A549 (cell line): ENCODE measurements at regions of chr2 and their contacts with region 1.

Region 1: DNA sequence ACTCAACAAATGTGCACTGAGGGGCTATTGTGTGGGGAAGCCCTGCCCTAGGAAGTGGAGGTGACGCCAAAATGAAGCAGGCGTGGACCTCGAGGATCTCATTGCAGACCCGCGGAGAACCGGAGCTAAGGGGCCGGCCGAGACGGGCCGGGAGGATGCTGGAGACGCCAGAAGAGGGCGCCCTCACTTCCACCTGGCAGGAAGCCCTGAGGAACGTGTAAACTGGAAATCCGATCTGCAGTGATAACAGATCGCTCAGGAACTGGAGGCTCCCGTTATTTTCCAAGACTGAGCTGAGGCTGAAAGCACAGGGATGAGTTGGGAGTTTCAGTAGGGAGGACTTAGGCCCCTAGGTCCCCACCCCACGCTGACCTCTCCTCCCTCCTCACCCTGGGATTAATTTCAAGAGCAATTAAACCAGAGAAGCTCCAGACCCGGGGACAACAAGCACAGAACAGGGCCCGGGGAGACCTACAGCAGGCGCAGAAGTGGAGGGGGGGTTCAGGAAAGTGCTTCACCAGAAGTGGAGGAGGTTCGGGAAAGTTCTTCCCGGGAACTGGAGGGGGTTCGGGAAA is 7.7 kb upstream of the COL6A3 start:
- DNase-seq: peak; percentile 71 to 85
- ATAC-seq: peak; percentile 92 to 98
- H3K4me3 ChIP-seq: 0 out of 3 replicates have a peak overlapping the region, but pooled peaks have one; percentile 22
- H3K27ac ChIP-seq: peak overlapping the region; percentile 78 to 83
- H3K4me1 ChIP-seq: peaks cover 9% of the 10 kb centered on the region
- CTCF ChIP-seq: peak; percentile 85
- EP300 ChIP-seq: no peak
- POLR2A ChIP-seq: no peak
- RAD21 ChIP-seq: peak; percentile 73 to 75

Region 2: DNA sequence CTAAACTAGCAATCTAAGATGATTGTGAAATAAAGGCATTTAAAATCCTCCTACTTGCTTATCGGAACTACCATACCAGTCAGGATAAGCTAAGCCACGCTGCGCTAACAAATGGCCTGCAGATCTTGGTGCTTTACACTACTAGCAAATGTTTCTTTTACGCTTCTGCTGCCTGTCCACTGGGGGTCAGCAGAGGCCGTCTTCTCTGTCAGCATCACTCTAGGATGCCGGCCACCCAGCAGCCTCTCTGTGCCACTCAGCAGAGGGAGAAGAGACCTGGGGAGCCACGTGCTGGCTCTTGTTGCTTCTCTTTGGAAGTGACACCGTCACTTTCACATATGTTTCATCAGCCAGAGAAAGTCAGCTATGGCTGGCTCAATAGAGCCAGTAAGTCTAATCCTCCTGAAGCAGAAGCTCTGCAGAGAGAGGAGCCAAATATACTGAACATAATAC is 299.4 kb before region 1 on chr2:
- CTCF ChIA-PET with region 1: interaction called, 26 read pairs
- POLR2A ChIA-PET with region 1: no interaction called
- DNase-seq: peak; percentile 35 to 80
- ATAC-seq: peak; percentile 92 to 97
- H3K4me3 ChIP-seq: no peak overlapping the region
- H3K27ac ChIP-seq: peak overlapping the region; percentile 44 to 73; a peak in 4 of 6 replicates
- H3K4me1 ChIP-seq: peaks cover 6% of the 10 kb centered on the region
- CTCF ChIP-seq: peak; percentile 86
- EP300 ChIP-seq: no peak
- POLR2A ChIP-seq: no peak
- RAD21 ChIP-seq: peak; percentile 91 to 92

Region 3: GRCh38 chr2:237154082-237154638 is 267.5 kb before region 1 on chr2:
- CTCF ChIA-PET with region 1: interaction called, 14 read pairs
- POLR2A ChIA-PET with region 1: no interaction called
- DNase-seq: peak; percentile 45 to 75
- ATAC-seq: peak; percentile 55 to 83; a peak in 3 of 6 replicates
- H3K4me3 ChIP-seq: no peak overlapping the region
- H3K27ac ChIP-seq: no peak overlapping the region
- H3K4me1 ChIP-seq: no peaks in the 10 kb centered on the region
- CTCF ChIP-seq: peak; percentile 74
- EP300 ChIP-seq: no peak
- POLR2A ChIP-seq: no peak
- RAD21 ChIP-seq: peak; percentile 90 to 98

Region 4: DNA sequence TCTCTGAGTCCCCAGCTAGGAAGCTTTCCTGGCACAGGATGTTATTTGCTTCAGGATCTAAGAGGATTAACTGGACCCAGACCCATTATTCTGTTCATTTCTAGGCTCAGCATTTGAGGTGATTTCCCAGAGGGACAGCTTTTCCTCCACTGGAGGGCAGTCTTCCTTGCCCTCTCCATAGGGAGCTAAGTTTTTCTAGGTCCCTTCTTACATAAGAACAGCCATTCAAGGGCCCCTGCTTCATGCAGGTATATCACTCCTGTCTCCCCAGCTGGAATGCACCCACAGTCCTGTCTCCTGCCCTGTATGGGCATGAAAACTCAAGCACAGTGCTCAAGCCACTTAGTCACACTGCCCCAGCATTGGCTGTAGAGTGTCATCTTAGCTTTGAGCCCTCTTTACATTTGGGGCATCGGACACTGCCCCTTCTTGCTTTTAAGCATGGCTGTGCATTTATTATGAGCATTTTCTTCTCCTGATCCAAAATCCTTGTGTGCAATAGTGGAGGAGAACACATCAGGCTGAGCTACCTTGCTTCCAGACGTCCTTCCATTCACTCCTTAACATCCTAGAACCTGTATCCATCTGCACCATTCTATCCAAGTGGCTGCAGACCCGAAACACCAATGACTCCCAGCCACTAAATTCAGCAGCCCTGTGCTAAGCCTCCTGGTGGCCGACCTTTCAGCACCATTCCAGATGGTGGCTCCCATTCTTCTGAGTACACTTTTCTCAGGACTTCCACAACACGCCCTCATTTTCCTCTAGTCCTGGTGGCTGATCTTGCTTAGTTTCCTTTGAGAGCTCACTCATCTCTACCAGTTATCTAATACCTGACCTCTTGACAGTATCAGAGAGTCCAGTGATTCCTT is 256.0 kb before region 1 on chr2:
- CTCF ChIA-PET with region 1: interaction called, 14 read pairs
- POLR2A ChIA-PET with region 1: no interaction called
- DNase-seq: peak in 1 of 2 experiments; percentile 35
- ATAC-seq: peak; percentile 68 to 80; a peak in 5 of 6 replicates
- H3K4me3 ChIP-seq: no peak overlapping the region
- H3K27ac ChIP-seq: no peak overlapping the region; a peak in 1 of 6 replicates
- H3K4me1 ChIP-seq: no peaks in the 10 kb centered on the region
- CTCF ChIP-seq: peak; percentile 52
- EP300 ChIP-seq: no peak
- POLR2A ChIP-seq: no peak
- RAD21 ChIP-seq: peak; percentile 38 to 63; a peak in 4 of 5 replicates

Region 5: DNA sequence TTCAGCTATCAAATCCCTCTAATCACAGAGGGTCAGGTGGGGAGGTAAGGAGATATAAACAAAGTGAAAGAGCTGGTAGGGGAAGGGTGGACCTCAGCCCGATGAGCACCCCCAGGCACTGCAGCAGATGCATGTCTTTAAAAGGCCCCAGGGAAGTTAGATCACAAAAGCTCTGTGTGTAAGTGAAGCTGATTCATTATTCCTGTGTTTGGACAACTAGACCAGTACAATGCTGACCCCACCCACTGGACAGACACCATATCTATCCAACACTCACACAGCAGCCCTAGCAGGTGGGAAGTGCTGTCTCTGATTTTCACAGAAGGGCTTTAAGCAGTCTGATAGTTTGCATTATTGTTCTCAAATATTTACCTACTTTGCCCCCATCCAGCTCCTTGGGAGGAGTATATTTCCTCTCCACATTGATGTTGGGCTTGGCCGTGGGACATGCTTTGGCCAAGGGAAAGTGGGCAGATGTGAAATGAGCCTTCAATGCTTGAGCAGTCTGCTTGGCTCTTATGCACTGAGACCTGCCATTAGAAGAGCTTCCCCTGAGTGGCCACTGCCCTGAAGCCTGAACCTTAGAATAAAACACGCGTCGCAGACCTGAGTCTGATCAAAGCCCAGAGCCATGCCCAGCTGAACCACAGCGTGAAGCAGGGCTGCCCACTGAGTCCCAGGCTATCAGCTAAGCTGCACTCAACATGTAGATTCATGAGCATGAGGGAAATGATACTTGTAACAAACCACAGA is 224.6 kb before region 1 on chr2:
- CTCF ChIA-PET with region 1: interaction called, 11 read pairs
- POLR2A ChIA-PET with region 1: no interaction called
- DNase-seq: peak; percentile 28 to 56
- ATAC-seq: peak; percentile 58 to 78; a peak in 5 of 6 replicates
- H3K4me3 ChIP-seq: no peak overlapping the region
- H3K27ac ChIP-seq: peak overlapping the region; percentile 48 to 66
- H3K4me1 ChIP-seq: peaks cover 43% of the 10 kb centered on the region
- CTCF ChIP-seq: no peak
- EP300 ChIP-seq: no peak
- POLR2A ChIP-seq: no peak
- RAD21 ChIP-seq: no peak

Region 6: DNA sequence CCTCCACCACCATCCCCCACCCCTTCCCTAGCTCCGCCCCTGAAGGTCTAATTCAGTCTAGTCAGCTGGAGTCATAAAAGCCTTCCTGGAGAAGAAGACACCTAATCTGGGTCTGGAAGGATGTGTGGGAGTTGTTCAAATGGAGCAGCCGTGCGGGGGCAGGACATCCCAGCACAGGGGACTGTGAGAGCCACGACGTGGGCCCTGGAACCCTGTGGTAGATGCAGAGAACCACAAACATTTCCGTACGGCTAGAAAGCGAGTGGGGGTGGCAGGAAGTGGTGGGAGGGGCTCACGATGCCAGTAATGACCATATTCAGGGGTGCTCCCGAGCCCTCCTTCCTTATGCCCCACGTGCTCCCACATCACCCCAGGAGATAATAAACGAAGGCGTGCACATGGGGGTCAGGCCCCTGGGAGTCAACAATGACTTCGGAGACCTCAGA is 13.3 kb after region 1 on chr2:
- CTCF ChIA-PET with region 1: interaction called, 47 read pairs
- POLR2A ChIA-PET with region 1: no interaction called
- DNase-seq: no peak
- ATAC-seq: no peak
- H3K4me3 ChIP-seq: no peak overlapping the region
- H3K27ac ChIP-seq: peak overlapping the region; percentile 31 to 47; a peak in 2 of 6 replicates
- H3K4me1 ChIP-seq: peaks cover 39% of the 10 kb centered on the region
- CTCF ChIP-seq: no peak
- EP300 ChIP-seq: no peak
- POLR2A ChIP-seq: no peak
- RAD21 ChIP-seq: no peak

Region 7: GRCh38 chr2:237483040-237483721 is 61.6 kb after region 1 on chr2:
- CTCF ChIA-PET with region 1: interaction called, 18 read pairs
- POLR2A ChIA-PET with region 1: no interaction called
- DNase-seq: peak; percentile 58 to 90
- ATAC-seq: peak; percentile 57 to 61
- H3K4me3 ChIP-seq: 0 out of 3 replicates have a peak overlapping the region, but pooled peaks have one; percentile 6
- H3K27ac ChIP-seq: peak overlapping the region; percentile 98 to 99
- H3K4me1 ChIP-seq: peaks cover 42% of the 10 kb centered on the region
- CTCF ChIP-seq: no peak
- EP300 ChIP-seq: no peak
- POLR2A ChIP-seq: peak; percentile 52; the same call in 1 of the 2 replicates
- RAD21 ChIP-seq: peak; percentile 31 to 41; a peak in 2 of 5 replicates